ENCODE measurements at regions of chr4 and their contacts with region 1.

Region 1: GRCh38 chr4:115851918-115852766 is 738.7 kb upstream of the NDST4 start:
- H3K4me3 ChIP-seq: no peak overlapping the region
- H3K27ac ChIP-seq: no peak overlapping the region
- H3K4me1 ChIP-seq: no peaks in the 10 kb centered on the region
- CTCF ChIP-seq: no peak

Region 2: DNA sequence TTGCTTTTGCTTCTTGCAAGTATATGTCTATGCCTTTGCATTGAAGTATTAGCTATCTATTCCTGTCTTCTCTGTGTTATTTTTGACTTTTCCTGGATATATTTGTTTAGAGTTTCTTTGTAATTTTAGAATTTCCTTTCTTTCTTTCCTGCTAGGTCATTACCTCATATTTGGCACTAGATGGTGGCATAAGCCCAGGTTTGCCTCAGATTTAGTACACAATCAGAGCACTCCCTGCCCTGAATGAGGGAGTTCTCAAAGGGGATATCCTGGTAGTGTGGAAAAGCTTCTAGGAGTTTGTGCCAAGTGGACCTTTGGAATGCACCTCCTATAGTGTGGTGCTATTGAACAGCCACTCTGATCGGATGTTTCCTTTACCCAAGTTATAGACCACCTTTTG is 1071.9 kb before region 1 on chr4:
- CTCF ChIA-PET with region 1: interaction called, 11 read pairs
- POLR2A ChIA-PET with region 1: no interaction called
- H3K4me3 ChIP-seq: no peak overlapping the region
- H3K27ac ChIP-seq: no peak overlapping the region
- H3K4me1 ChIP-seq: no peaks in the 10 kb centered on the region
- CTCF ChIP-seq: peak; percentile 65

Region 3: DNA sequence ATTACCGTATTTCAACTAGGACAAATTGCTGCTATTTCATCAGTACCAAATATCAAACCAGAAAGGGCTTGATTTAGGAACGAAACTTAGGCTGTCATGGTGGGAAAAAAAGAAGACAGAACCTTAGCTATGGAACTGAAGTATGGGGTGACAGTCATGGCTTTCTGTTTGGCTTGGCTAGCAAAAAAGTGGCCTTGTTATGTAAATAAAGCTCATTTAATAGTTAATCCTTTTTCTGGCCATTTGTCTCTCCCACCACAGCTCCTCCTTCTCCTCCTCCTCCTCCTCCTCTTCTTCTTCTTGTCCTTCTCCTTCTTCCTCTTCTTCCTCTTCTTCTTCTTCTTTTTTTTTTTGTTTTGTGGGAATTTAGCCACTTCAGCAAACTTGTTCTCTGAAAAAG is 304.0 kb before region 1 on chr4:
- CTCF ChIA-PET with region 1: no interaction called
- POLR2A ChIA-PET with region 1: no interaction called
- H3K4me3 ChIP-seq: no peak overlapping the region
- H3K27ac ChIP-seq: no peak overlapping the region
- H3K4me1 ChIP-seq: no peaks in the 10 kb centered on the region
- CTCF ChIP-seq: no peak

Region 4: GRCh38 chr4:115740806-115741205 is 111.3 kb before region 1 on chr4:
- CTCF ChIA-PET with region 1: no interaction called
- POLR2A ChIA-PET with region 1: no interaction called
- H3K4me3 ChIP-seq: no peak overlapping the region
- H3K27ac ChIP-seq: no peak overlapping the region
- H3K4me1 ChIP-seq: no peaks in the 10 kb centered on the region
- CTCF ChIP-seq: no peak

Region 5: DNA sequence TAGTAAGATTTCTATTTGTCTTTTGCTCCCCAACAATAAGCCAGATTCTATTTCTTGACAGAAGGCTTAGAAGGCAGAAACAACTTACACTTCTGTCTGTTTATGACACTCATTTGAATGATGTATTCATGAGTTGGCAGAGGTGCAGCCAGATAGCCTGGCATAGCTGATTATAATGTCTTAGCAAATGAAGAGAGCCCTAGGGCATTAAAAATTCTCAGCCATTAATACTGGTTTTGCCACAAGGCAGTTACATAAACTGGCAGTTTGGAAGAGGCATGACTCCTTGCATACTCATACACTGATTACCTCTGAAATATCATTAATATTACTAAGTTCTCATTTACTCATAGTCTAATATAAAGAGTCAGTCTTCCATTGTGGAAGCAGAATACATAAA is 10.3 kb before region 1 on chr4:
- CTCF ChIA-PET with region 1: no interaction called
- POLR2A ChIA-PET with region 1: no interaction called
- H3K4me3 ChIP-seq: no peak overlapping the region
- H3K27ac ChIP-seq: no peak overlapping the region
- H3K4me1 ChIP-seq: no peaks in the 10 kb centered on the region
- CTCF ChIP-seq: no peak